Activated CD8-positive, alpha-beta memory T cell treated with anti-CD3 and anti-CD28 coated beads, Interleukin-2, amount 10 ng/mL, durations not matched to agents 7 days and 5 days (primary cell): ENCODE measurements at regions of chr17 and their contacts with region 1.

Region 1: GRCh38 chr17:28763804-28764266 is 20.0 kb downstream of the TRAF4 start:
- DNase-seq: peak; percentile 86
- ATAC-seq: peak; percentile 70
- H3K4me3 Mint-ChIP-seq: no peak overlapping the region
- H3K27ac Mint-ChIP-seq: peak overlapping the region; percentile 50
- H3K4me1 Mint-ChIP-seq: peaks cover 42% of the 10 kb centered on the region
- H3K27me3 Mint-ChIP-seq: no peaks in the 10 kb centered on the region

Region 2: GRCh38 chr17:28644985-28645939 is 118.6 kb before region 1 on chr17 and contains the start of gene BLTP2:
- CTCF ChIA-PET with region 1: interaction called, 12 read pairs
- DNase-seq: peak; percentile 98
- ATAC-seq: peak; percentile 98
- H3K4me3 Mint-ChIP-seq: peak within 1 kb of the TSS; percentile 86
- H3K27ac Mint-ChIP-seq: peak within 1 kb of the TSS; percentile 92
- H3K4me1 Mint-ChIP-seq: peaks cover 38% of the 10 kb centered on the region
- H3K27me3 Mint-ChIP-seq: no peaks in the 10 kb centered on the region
- total RNA-seq, gene BLTP2: 163 to 186 TPM

Region 3: DNA sequence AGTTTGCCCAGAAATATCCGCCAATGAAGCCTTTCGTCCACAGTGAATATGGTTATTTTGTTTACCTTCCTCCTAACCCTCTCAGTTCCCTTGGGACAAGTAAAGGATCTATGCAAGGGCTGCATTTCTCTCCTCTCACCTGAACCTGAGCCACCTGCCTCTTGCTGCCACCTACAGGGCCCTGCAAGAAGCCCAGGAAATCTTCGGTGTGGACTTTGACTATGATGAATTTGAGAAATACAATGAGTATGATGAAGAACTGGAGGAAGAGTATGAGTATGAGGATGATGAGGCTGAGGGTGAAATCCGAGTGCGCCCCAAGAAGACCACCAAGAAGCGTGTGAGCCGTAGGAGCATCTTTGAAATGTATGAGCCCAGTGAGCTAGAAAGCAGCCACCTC is 87.9 kb before region 1 on chr17:
- CTCF ChIA-PET with region 1: no interaction called
- DNase-seq: no peak
- ATAC-seq: no peak
- H3K4me3 Mint-ChIP-seq: no peak overlapping the region
- H3K27ac Mint-ChIP-seq: no peak overlapping the region
- H3K4me1 Mint-ChIP-seq: no peaks in the 10 kb centered on the region
- H3K27me3 Mint-ChIP-seq: no peaks in the 10 kb centered on the region

Region 4: DNA sequence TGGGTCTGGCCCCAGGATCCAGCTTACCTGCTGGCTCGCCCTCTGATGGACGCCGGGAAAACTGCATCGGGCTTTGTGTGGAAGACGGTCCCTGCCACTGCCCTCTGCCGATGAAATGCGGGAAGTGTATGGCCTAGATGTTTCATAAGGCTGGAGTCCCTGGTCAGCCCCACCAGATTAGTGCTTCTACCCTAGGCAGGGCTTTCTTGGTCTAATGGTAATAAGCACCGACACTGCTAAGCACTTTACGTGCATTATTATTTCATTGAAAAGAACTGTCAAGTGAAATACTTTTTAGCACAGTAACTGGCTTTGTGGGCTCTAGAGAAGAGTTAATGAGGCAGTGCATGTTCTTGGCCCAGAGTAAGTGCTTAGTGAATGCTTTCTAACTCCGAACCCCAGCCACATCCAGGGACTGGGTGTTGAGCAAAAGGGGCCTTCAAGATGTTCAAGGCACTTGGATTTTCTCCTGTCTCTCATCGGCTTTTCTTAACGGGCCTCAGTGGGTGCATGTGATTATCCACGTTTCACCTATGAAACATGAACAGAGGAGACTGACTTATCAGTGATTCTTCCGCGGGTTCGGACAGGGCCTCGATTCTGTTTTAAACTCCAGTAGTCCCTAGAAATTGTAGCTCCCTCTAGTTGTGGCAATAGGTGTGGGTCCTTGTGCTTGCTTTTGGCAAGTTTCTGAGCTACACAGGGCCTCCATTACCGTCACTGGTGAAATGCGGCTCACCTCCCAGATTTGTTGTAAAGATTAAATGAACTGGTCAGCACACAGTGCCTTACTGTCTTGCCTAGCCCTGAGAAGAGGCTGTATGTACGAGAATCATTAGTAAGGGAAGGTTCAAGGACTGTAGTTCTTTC is 13.4 kb before region 1 on chr17:
- CTCF ChIA-PET with region 1: interaction called, 98 read pairs
- DNase-seq: peak; percentile 93
- ATAC-seq: peak; percentile 88
- H3K4me3 Mint-ChIP-seq: no peak overlapping the region
- H3K27ac Mint-ChIP-seq: no peak overlapping the region
- H3K4me1 Mint-ChIP-seq: peaks cover 34% of the 10 kb centered on the region
- H3K27me3 Mint-ChIP-seq: no peaks in the 10 kb centered on the region

Region 5: GRCh38 chr17:28812091-28812747 is 48.4 kb after region 1 on chr17:
- CTCF ChIA-PET with region 1: interaction called, 15 read pairs
- DNase-seq: peak; percentile 98
- ATAC-seq: peak; percentile 100
- H3K4me3 Mint-ChIP-seq: peak overlapping the region; percentile 83
- H3K27ac Mint-ChIP-seq: peak overlapping the region; percentile 89
- H3K4me1 Mint-ChIP-seq: peaks cover 25% of the 10 kb centered on the region
- H3K27me3 Mint-ChIP-seq: no peaks in the 10 kb centered on the region

Region 6: GRCh38 chr17:28842282-28843012 is 78.6 kb after region 1 on chr17 and contains the start of gene FAM222B:
- CTCF ChIA-PET with region 1: interaction called, 37 read pairs
- DNase-seq: peak; percentile 90
- ATAC-seq: peak; percentile 100
- H3K4me3 Mint-ChIP-seq: peak within 1 kb of the TSS; percentile 99
- H3K27ac Mint-ChIP-seq: peak within 1 kb of the TSS; percentile 96
- H3K4me1 Mint-ChIP-seq: peaks cover 21% of the 10 kb centered on the region
- H3K27me3 Mint-ChIP-seq: no peaks in the 10 kb centered on the region
- total RNA-seq, gene FAM222B: 14.5 to 19.6 TPM

Region 7: GRCh38 chr17:28878981-28879380 is 115.1 kb after region 1 on chr17:
- CTCF ChIA-PET with region 1: interaction called, 14 read pairs
- DNase-seq: no peak
- ATAC-seq: no peak
- H3K4me3 Mint-ChIP-seq: no peak overlapping the region
- H3K27ac Mint-ChIP-seq: no peak overlapping the region
- H3K4me1 Mint-ChIP-seq: peaks cover 20% of the 10 kb centered on the region
- H3K27me3 Mint-ChIP-seq: no peaks in the 10 kb centered on the region

Region 8: GRCh38 chr17:28916302-28916934 is 152.6 kb after region 1 on chr17:
- CTCF ChIA-PET with region 1: interaction called, 18 read pairs
- DNase-seq: peak; percentile 64
- ATAC-seq: peak; percentile 65
- H3K4me3 Mint-ChIP-seq: no peak overlapping the region
- H3K27ac Mint-ChIP-seq: peak overlapping the region; percentile 52
- H3K4me1 Mint-ChIP-seq: peaks cover 8% of the 10 kb centered on the region
- H3K27me3 Mint-ChIP-seq: no peaks in the 10 kb centered on the region